ENCODE measurements at regions of chr11 and their contacts with region 1.

Region 1: GRCh38 chr11:64341851-64342791 is 2.1 kb downstream of the CCDC88B start:
- DNase-seq: peak; percentile 93
- H3K4me3 ChIP-seq: peak overlapping the region; percentile 38
- H3K27ac ChIP-seq: peak overlapping the region; percentile 70
- H3K4me1 ChIP-seq: no peaks in the 10 kb centered on the region
- H3K27me3 ChIP-seq: no peaks in the 10 kb centered on the region
- CTCF ChIP-seq: peak; percentile 57

Region 2: DNA sequence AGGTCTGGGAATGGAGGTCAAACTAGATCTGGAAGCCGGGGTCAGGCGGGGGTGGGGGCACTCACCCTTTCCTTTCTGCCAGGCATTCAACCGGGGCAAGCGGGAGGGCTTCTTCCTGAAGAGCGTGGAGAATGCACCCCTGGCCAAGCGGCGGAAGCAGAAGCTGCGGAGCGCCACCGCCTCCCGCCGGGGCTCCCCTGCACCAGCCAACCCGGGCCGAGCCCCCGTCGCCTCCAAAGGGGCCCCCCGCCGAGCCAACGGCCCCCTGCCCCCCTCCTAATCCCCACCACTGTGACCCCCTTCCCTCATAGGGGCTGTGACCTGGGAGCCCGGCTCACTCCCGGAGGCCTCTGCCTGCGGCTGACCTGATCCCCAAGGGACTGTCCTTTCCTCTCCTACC is 29.1 kb after region 1 on chr11:
- CTCF ChIA-PET with region 1: interaction called, 16 read pairs
- POLR2A ChIA-PET with region 1: no interaction called
- intact Hi-C with region 1: no loop called
- DNase-seq: no peak
- H3K4me3 ChIP-seq: no peak overlapping the region
- H3K27ac ChIP-seq: no peak overlapping the region
- H3K4me1 ChIP-seq: peaks cover 10% of the 10 kb centered on the region
- H3K27me3 ChIP-seq: no peaks in the 10 kb centered on the region
- CTCF ChIP-seq: no peak

Region 3: DNA sequence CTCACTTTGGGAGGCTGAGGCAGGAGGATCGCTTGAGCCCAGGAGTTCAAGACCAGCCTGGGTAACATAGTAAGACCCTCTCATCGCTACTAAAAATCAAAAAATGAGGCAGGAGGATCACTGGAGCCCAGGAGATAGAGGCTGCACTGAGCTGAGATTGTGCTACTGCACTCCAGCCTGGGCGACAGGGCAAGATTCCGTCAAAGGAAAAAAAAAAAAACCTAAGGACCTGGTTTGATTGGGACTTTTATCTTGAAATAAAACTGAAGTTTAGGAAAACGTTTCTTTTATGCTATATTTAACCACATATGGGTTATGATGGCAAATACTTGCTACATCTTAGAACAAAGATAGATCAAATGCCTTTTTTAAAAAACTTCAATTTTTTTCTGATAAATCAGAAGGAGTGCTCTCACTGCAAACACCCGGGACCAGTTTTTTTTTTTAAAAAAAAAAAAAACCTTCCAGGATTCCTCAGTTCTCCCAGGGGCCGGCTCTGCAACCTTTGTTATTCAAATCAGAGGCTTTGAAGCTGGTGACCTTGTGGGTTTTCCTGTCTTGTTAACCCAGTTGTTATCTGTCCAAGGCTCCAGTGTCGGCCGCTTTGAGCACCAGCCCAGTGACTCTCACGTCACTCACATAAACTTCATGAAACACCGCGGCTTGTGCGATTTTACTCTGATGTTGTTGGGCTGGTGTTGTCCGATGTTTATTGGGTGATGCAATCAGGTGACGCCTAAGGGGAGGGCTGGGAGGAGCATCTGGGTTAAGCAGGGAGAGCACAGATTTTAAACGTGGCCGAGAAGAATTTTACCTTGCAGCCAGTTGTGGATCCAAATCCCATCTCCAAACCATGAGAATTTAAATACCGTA is 224.2 kb after region 1 on chr11:
- CTCF ChIA-PET with region 1: no interaction called
- POLR2A ChIA-PET with region 1: interaction called, 11 read pairs
- intact Hi-C with region 1: no loop called
- DNase-seq: peak; percentile 88
- H3K4me3 ChIP-seq: peak overlapping the region; percentile 21
- H3K27ac ChIP-seq: peak overlapping the region; percentile 58
- H3K4me1 ChIP-seq: peaks cover 10% of the 10 kb centered on the region
- H3K27me3 ChIP-seq: no peaks in the 10 kb centered on the region
- CTCF ChIP-seq: no peak